Activated CD4-positive, alpha-beta T cell treated with anti-CD3 and anti-CD28 coated beads for 36 hours (primary cell): ENCODE measurements at regions of chr17 and their contacts with region 1.

Region 1: DNA sequence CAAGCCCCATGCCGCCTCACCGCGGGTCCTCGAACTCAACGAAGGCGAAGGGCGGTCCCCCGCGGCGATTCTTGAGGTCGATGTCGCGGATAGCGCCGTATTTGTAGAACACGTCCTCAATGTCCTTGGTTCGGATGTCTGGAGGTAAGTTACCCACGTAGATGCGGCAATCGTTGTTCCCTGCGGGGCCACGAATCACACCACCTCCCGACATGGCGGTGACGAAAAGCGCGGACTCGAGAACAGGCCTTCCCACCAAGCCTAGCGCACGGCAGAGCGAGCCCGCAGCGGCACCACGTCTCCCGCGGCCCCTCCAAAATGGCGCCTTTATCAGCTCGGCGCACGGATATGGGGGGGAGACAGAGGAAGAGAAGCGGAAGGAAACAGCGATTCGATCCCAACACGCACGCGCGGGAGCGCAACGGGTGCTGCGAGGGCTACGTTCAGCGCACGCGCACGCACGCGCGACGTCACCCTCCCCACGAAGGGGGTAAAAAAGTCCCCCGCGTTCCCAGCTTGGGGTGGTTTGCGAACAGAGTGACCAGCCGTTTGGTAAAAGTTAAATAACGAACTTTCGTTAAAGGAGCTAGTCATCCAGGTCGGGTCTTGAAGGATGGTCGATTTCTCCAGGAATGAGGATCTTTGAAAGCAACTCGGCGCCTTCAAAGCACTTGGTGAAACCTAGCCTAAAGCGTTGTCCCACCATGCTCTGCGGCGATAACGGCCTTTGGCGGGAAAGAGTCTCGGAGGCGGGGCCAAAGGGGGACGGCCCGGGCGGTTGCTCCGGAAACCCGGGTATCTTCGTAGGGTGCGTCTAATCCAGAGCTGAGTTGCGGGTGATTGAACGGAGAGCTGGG is at the start of gene SRSF1:
- DNase-seq: peak; percentile 99
- ATAC-seq: peak; percentile 90
- H3K4me3 Mint-ChIP-seq: peak within 1 kb of the TSS; percentile 100
- H3K27ac Mint-ChIP-seq: peak within 1 kb of the TSS; percentile 100
- H3K4me1 Mint-ChIP-seq: peaks cover 35% of the 10 kb centered on the region
- H3K27me3 Mint-ChIP-seq: no peaks in the 10 kb centered on the region
- total RNA-seq, gene SRSF1: 271 to 368 TPM

Region 2: DNA sequence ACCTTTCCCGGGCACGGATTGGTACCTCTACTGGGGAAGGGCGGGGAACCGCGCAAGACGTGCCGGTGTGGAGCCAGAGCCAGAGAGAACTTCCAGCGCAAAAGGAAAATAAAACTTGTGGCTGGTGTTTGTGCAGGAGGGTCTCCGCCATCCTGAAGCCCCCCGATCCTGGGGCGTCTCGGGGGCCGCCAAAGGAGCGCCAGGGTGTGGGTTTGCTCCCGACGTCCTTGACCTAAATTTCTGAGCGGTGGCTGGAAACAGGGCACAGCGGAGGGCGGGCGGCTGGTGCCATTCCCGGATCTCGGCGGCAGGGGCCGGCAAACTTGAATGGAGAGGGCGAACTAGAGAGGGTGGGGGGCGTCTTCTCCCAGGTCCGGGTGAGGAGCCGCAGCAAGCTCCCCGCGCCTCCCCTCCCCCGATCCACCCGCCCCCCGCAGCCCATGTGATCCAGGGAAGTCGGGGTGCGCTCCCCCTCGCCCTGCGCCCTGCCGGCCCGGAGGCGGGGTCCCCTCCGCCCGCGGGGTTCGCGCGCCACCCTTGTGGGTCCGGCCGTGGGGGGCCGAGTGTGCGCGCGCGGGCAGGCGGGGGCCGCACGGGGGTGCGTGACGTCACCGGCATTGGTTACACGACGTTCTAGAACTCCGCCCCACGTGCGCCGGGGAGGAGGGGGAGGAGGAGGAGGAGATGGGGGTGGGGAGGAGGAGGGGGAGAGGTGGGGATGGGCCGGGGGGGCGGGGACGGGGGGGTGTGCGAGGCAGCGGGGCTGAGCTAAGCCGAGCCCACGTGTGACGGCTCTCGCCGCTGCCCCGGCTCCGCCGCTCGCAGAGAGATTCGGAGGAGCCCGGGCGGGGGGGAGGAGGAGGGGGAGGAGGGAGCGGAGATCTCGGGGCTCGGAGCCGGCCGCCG is 751.1 kb before region 1 on chr17 and contains the start of gene MSI2:
- CTCF ChIA-PET with region 1: no interaction called
- POLR2A ChIA-PET with region 1: no interaction called
- intact Hi-C with region 1: loop called in 1 of 2 experiments (anchors 5 kb)
- DNase-seq: peak; percentile 93
- ATAC-seq: peak; percentile 75
- H3K4me3 Mint-ChIP-seq: peak within 1 kb of the TSS; percentile 80
- H3K27ac Mint-ChIP-seq: peak within 1 kb of the TSS; percentile 79
- H3K4me1 Mint-ChIP-seq: peaks cover 42% of the 10 kb centered on the region
- H3K27me3 Mint-ChIP-seq: no peaks in the 10 kb centered on the region
- total RNA-seq, gene MSI2: 55.3 to 57.2 TPM

Region 3: GRCh38 chr17:57995076-57995956 is 11.8 kb before region 1 on chr17:
- CTCF ChIA-PET with region 1: interaction called, 74 read pairs
- POLR2A ChIA-PET with region 1: interaction called, 15 read pairs
- intact Hi-C with region 1: loop called (anchors 1 kb)
- DNase-seq: peak; percentile 77
- ATAC-seq: peak; percentile 82
- H3K4me3 Mint-ChIP-seq: no peak overlapping the region
- H3K27ac Mint-ChIP-seq: peak overlapping the region; percentile 21
- H3K4me1 Mint-ChIP-seq: peaks cover 68% of the 10 kb centered on the region
- H3K27me3 Mint-ChIP-seq: no peaks in the 10 kb centered on the region

Region 4: DNA sequence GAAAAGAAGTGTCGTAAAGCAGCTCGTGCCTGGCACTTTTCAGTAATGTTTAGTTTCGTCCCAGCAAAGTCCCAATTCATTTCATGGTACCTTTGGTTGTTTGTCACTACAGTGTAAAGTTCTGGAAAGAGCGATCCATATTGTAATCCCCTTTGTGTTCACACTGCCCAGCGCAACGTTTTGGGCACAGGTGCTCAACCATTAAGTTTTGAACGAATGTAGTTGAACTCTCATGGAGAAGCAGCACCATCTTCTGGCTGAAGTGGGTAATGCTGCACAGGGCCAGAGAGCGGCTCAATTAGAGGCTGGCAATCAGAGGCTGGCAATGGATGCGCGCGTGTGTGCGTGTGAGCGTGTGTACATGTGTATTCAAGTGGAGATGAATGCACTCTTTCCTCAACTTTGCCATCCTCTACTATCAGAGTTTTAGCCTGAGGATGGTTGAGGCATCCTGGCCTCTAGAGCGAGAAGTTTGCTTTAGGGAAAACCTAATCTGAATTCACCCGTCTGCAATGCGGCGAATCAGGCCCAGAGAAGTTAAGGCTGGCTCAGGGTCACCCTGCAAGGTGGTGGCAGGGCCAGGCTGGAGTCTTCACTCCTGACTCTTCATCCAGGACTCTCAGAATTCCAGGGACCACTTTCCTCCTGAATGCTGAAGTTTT is 105.9 kb after region 1 on chr17:
- CTCF ChIA-PET with region 1: interaction called, 3 read pairs
- POLR2A ChIA-PET with region 1: no interaction called
- intact Hi-C with region 1: loop called (anchors 1 to 5 kb)
- DNase-seq: peak; percentile 91
- ATAC-seq: peak; percentile 96
- H3K4me3 Mint-ChIP-seq: no peak overlapping the region
- H3K27ac Mint-ChIP-seq: no peak overlapping the region
- H3K4me1 Mint-ChIP-seq: no peaks in the 10 kb centered on the region
- H3K27me3 Mint-ChIP-seq: peaks cover 5% of the 10 kb centered on the region

Region 5: GRCh38 chr17:58127861-58128260 is 120.7 kb after region 1 on chr17:
- CTCF ChIA-PET with region 1: no interaction called
- POLR2A ChIA-PET with region 1: no interaction called
- intact Hi-C with region 1: no loop called
- DNase-seq: no peak
- ATAC-seq: no peak
- H3K4me3 Mint-ChIP-seq: no peak overlapping the region
- H3K27ac Mint-ChIP-seq: no peak overlapping the region
- H3K4me1 Mint-ChIP-seq: peaks cover 3% of the 10 kb centered on the region
- H3K27me3 Mint-ChIP-seq: peaks cover 4% of the 10 kb centered on the region

Region 6: DNA sequence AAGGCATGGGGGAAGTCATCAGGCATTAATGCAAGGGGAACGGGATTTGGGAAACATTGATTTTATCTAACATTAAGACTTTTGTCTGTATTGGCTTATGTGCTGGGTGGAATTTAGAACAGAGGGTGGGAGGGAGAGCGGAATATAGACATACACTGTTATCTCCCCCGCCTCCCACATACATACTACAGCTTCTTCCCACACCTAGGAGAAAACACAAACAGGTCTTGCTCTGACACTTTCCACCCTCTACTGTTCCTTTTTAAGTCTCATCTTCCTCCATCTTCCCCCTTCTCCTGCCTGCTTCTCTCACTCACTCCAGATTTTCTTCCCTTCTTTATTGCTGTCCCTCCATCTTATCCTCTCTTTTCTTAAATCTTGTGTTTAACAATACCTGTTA is 141.5 kb after region 1 on chr17:
- CTCF ChIA-PET with region 1: no interaction called
- POLR2A ChIA-PET with region 1: no interaction called
- intact Hi-C with region 1: no loop called
- DNase-seq: no peak
- ATAC-seq: no peak
- H3K4me3 Mint-ChIP-seq: no peak overlapping the region
- H3K27ac Mint-ChIP-seq: no peak overlapping the region
- H3K4me1 Mint-ChIP-seq: peaks cover 20% of the 10 kb centered on the region
- H3K27me3 Mint-ChIP-seq: no peaks in the 10 kb centered on the region

Region 7: GRCh38 chr17:58219001-58219788 is 212.0 kb after region 1 on chr17 and contains the start of gene MKS1:
- CTCF ChIA-PET with region 1: interaction called, 6 read pairs
- POLR2A ChIA-PET with region 1: no interaction called
- intact Hi-C with region 1: loop called in 1 of 2 experiments (anchors 1 kb)
- DNase-seq: peak; percentile 98
- ATAC-seq: peak; percentile 100
- H3K4me3 Mint-ChIP-seq: peak within 1 kb of the TSS; percentile 90
- H3K27ac Mint-ChIP-seq: peak within 1 kb of the TSS; percentile 86
- H3K4me1 Mint-ChIP-seq: peaks cover 22% of the 10 kb centered on the region
- H3K27me3 Mint-ChIP-seq: peaks cover 2% of the 10 kb centered on the region
- total RNA-seq, gene MKS1: 20.4 to 22.5 TPM

Region 8: GRCh38 chr17:58344047-58344790 is 337.1 kb after region 1 on chr17:
- CTCF ChIA-PET with region 1: interaction called, 4 read pairs
- POLR2A ChIA-PET with region 1: no interaction called
- intact Hi-C with region 1: loop called (anchors 2 to 5 kb)
- DNase-seq: peak; percentile 95
- ATAC-seq: peak; percentile 76
- H3K4me3 Mint-ChIP-seq: peak overlapping the region; percentile 100
- H3K27ac Mint-ChIP-seq: peak overlapping the region; percentile 99
- H3K4me1 Mint-ChIP-seq: peaks cover 74% of the 10 kb centered on the region
- H3K27me3 Mint-ChIP-seq: no peaks in the 10 kb centered on the region

Region 9: GRCh38 chr17:59010026-59010425 is 1002.9 kb after region 1 on chr17:
- CTCF ChIA-PET with region 1: no interaction called
- POLR2A ChIA-PET with region 1: no interaction called
- intact Hi-C with region 1: no loop called
- DNase-seq: no peak
- ATAC-seq: no peak
- H3K4me3 Mint-ChIP-seq: no peak overlapping the region
- H3K27ac Mint-ChIP-seq: no peak overlapping the region
- H3K4me1 Mint-ChIP-seq: peaks cover 2% of the 10 kb centered on the region
- H3K27me3 Mint-ChIP-seq: no peaks in the 10 kb centered on the region